GM23248 (cell line): ENCODE measurements at regions of chr2 and their contacts with region 1.

Region 1: GRCh38 chr2:157492189-157492773 is 48.4 kb upstream of the CYTIP start:
- DNase-seq: peak; percentile 78
- H3K4me3 ChIP-seq: no peak overlapping the region
- H3K27ac ChIP-seq: no peak overlapping the region
- H3K4me1 ChIP-seq: no peaks in the 10 kb centered on the region
- H3K27me3 ChIP-seq: no peaks in the 10 kb centered on the region; the same call in 1 of the 2 replicates

Region 2: GRCh38 chr2:157990173-157990572 is 497.9 kb after region 1 on chr2:
- in situ Hi-C with region 1: loop called (anchors 10 kb)
- DNase-seq: no peak
- H3K4me3 ChIP-seq: no peak overlapping the region
- H3K27ac ChIP-seq: no peak overlapping the region
- H3K4me1 ChIP-seq: no peaks in the 10 kb centered on the region
- H3K27me3 ChIP-seq: no peaks in the 10 kb centered on the region